ENCODE measurements at regions of chr11 and their contacts with region 1.

Region 1: DNA sequence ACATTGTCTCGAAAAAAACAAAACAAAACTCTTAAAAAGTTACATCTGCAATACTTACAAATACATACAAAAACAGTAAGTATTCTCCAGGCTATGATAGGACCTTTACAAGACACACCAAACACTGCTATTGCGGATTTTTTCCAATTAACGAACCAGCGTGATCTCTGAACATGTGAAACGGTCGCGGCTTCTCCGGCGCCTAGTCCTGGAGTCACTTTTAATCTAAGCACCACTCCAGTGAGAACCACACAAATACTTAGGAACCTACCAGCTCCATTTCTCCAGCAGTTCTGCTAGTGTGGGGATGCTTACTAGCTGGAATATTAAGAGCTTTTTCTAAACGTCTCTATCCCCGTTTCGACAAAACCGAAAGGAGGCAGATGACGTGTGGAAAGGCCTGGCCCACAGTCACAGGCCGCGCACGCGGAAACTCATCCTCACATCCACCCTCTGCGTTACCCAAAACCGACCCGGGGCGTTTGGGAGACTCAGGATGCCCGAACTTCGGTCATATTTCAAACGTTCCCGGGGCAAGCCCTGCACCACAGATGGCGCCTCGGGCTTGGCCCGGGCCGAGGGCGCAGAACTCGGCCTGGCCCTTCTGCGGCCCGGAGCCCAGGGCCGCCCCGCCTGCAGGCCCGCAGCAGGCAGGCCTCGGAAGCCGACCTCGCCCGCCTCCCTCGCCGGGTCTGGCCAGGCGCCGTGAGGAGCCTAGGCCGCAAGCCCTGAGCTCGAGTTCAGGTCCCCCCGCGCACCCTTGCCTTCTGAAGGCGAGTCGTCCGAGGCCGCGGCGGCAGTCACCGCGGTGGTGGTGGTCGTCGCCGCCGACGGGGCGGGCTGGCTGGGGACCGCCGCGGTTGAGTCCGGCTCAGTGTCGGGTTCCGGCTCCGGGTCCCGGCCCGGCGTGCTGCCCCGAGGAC is 575 bp downstream of the FNBP4 start:
- DNase-seq: no peak
- ATAC-seq: peak; percentile 14
- H3K4me3 ChIP-seq: peak overlapping the region; percentile 66 to 94
- H3K27ac ChIP-seq: peak overlapping the region; percentile 97
- H3K4me1 ChIP-seq: peaks cover 10 to 20% of the 10 kb centered on the region in 2 experiments
- H3K27me3 ChIP-seq: no peaks in the 10 kb centered on the region
- CTCF ChIP-seq: no peak
- POLR2A ChIP-seq: no peak
- RAD21 ChIP-seq: no peak

Region 2: GRCh38 chr11:47552566-47553416 is 213.8 kb before region 1 on chr11 and contains the start of gene CELF1:
- CTCF ChIA-PET with region 1: no interaction called
- POLR2A ChIA-PET with region 1: no interaction called
- RAD21 ChIA-PET with region 1: no interaction called
- intact Hi-C with region 1: loop called (anchors 5 kb)
- DNase-seq: peak; percentile 63
- ATAC-seq: peak; percentile 96
- H3K4me3 ChIP-seq: peak within 1 kb of the TSS; percentile 94 to 97
- H3K27ac ChIP-seq: peak within 1 kb of the TSS; percentile 93
- H3K4me1 ChIP-seq: peaks cover 13 to 25% of the 10 kb centered on the region in 2 experiments
- H3K27me3 ChIP-seq: no peaks in the 10 kb centered on the region
- CTCF ChIP-seq: peak; percentile 26 to 78 (median 76); a peak in 5 of 6 replicates
- POLR2A ChIP-seq: no peak
- RAD21 ChIP-seq: no peak
- total RNA-seq, gene CELF1: 133 TPM

Region 3: DNA sequence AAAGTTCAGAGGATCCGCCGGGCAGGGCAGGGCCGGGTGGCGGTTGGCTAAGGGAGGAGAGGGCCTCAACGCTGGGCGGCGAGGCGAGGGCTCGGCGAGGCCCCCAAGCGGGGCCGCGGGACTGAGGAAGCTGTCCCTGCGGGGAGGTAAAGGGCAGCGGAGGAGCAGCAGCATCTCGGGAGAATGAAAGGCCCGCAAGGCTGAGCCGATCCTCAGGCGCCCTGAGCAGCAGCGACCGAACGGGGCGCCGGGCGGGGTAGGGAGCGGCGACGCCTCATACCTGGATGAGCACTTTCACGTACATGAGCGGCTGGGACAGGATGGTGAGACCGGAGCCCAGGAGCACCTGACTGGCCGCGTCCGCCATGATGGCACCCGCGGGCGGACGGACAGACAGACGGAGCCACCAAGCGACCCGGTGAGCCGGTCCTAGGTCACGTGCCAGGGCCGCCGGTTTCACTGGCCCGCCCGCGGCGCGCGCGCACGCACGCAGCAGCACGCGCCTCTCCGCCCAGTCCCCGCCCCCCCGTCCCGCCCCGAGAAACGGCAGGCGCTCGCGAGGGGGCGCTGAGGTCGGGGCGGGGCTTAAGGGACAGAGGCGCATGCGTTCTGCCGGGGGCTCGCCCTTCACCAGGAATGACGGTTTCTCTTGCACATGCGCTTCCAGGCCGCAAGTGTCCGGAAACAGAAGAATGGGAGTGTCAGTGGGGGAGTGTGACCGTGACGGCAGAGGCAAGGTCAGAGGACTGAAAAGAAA is 124.3 kb before region 1 on chr11 and contains the start of gene MTCH2:
- CTCF ChIA-PET with region 1: no interaction called
- POLR2A ChIA-PET with region 1: no interaction called
- RAD21 ChIA-PET with region 1: interaction called in 1 of 2 experiments, 4 read pairs
- intact Hi-C with region 1: loop called (anchors 5 kb)
- DNase-seq: peak; percentile 91
- ATAC-seq: peak; percentile 91
- H3K4me3 ChIP-seq: peak within 1 kb of the TSS; percentile 70 to 92
- H3K27ac ChIP-seq: peak within 1 kb of the TSS; percentile 84
- H3K4me1 ChIP-seq: peaks cover 8 to 19% of the 10 kb centered on the region in 2 experiments
- H3K27me3 ChIP-seq: no peaks in the 10 kb centered on the region
- CTCF ChIP-seq: peak in 1 of 3 experiments; percentile 18; a peak in 1 of 6 replicates
- POLR2A ChIP-seq: peak; percentile 97
- RAD21 ChIP-seq: no peak
- total RNA-seq, gene MTCH2: 138 TPM

Measured in HCT116 (cell line).